Calu3 (cell line): ENCODE measurements at regions of chr11 and their contacts with region 1.

Region 1: GRCh38 chr11:17776212-17776880 is 41.8 kb downstream of the KCNC1 start:
- DNase-seq: no peak
- H3K4me3 Mint-ChIP-seq: no peak overlapping the region
- H3K27ac Mint-ChIP-seq: no peak overlapping the region
- H3K4me1 Mint-ChIP-seq: no peaks in the 10 kb centered on the region
- H3K27me3 Mint-ChIP-seq: peaks cover 98% of the 10 kb centered on the region
- CTCF ChIP-seq: no peak

Region 2: DNA sequence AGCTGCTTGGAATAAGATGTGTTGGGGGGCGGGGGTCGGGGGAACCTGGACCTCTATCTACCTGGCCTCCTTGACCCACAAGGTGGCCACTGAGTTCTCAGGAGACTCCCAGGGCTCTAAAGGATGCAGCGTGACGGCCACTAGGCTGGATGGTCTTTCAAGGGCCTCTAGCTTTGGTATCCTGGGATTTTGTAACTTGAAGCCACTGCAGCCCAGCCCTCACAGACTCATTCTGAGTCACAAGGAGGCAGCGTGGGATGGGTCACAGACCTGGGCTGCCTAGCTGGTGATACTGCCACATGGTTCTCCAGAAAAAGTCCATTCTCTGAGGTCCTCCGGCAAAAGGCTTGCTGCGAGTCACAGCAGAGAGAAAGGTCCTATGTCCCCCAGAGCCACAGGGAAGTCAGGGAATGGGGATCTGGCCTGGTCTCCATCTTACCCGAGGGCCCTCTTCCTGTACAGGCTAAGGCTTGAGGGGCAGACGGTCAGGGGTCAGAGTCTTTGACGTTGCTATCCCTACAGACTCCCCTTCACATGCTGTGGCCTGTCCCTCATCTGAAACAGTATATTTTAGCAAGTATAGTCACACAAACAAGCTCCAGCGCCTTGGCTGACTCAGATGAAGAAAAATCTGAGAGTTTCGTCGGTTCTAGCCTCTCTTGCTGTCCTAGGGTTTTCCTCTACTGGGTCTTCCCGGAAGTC is 10.6 kb after region 1 on chr11:
- CTCF ChIA-PET with region 1: interaction called, 10 read pairs
- intact Hi-C with region 1: no loop called
- DNase-seq: peak; percentile 17
- H3K4me3 Mint-ChIP-seq: no peak overlapping the region
- H3K27ac Mint-ChIP-seq: no peak overlapping the region
- H3K4me1 Mint-ChIP-seq: peaks cover 8% of the 10 kb centered on the region
- H3K27me3 Mint-ChIP-seq: peaks cover 8% of the 10 kb centered on the region
- CTCF ChIP-seq: no peak

Region 3: DNA sequence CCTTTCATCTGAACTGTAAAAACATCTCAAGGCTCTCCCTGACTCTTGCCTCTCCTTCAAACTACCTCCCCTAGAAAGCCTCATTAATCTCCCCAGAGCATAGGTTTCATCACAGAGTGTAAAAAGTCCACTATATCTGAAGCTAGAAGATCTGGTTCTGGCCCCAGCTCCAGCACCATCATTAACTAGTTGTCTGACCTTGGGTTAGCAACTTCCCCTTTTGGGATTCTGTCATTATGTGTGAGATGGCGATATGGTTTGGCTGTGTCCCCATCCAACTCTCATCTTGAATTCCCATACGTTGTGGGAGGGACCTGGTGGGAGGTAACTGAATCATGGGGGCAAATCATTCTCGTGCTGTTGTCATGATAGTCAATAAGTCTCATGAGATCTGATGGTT is 55.5 kb after region 1 on chr11:
- CTCF ChIA-PET with region 1: no interaction called
- intact Hi-C with region 1: no loop called
- DNase-seq: no peak
- H3K4me3 Mint-ChIP-seq: no peak overlapping the region
- H3K27ac Mint-ChIP-seq: no peak overlapping the region
- H3K4me1 Mint-ChIP-seq: no peaks in the 10 kb centered on the region
- H3K27me3 Mint-ChIP-seq: no peaks in the 10 kb centered on the region
- CTCF ChIP-seq: no peak